ENCODE measurements at regions of chr12 and their contacts with region 1.

Region 1: GRCh38 chr12:45745861-45746277 is 16.4 kb downstream of the ARID2 start:
- DNase-seq: peak; percentile 27
- H3K4me3 Mint-ChIP-seq: no peak overlapping the region
- H3K27ac Mint-ChIP-seq: no peak overlapping the region
- H3K4me1 Mint-ChIP-seq: no peaks in the 10 kb centered on the region
- H3K27me3 Mint-ChIP-seq: no peaks in the 10 kb centered on the region
- CTCF ChIP-seq: peak; percentile 19

Region 2: GRCh38 chr12:45170456-45171042 is 575.3 kb before region 1 on chr12:
- CTCF ChIA-PET with region 1: interaction called, 3 read pairs
- POLR2A ChIA-PET with region 1: no interaction called
- intact Hi-C with region 1: loop called (anchors 5 kb)
- DNase-seq: peak; percentile 84
- H3K4me3 Mint-ChIP-seq: no peak overlapping the region
- H3K27ac Mint-ChIP-seq: no peak overlapping the region
- H3K4me1 Mint-ChIP-seq: no peaks in the 10 kb centered on the region
- H3K27me3 Mint-ChIP-seq: no peaks in the 10 kb centered on the region
- CTCF ChIP-seq: peak; percentile 85